Activated T-helper 1 cell treated with anti-CD3 and anti-CD28 coated beads, Interleukin-12 subunit alpha, Interleukin-12 subunit beta, Interleukin-2, Interleukin-4 antibody, amounts not matched to agents 30 ng/mL and 10 ng/mL and 1 ng/mL, durations not matched to agents 14 hours and 24 hours and 36 hours (primary cell): ENCODE measurements at regions of chr16 and their contacts with region 1.

Region 1: DNA sequence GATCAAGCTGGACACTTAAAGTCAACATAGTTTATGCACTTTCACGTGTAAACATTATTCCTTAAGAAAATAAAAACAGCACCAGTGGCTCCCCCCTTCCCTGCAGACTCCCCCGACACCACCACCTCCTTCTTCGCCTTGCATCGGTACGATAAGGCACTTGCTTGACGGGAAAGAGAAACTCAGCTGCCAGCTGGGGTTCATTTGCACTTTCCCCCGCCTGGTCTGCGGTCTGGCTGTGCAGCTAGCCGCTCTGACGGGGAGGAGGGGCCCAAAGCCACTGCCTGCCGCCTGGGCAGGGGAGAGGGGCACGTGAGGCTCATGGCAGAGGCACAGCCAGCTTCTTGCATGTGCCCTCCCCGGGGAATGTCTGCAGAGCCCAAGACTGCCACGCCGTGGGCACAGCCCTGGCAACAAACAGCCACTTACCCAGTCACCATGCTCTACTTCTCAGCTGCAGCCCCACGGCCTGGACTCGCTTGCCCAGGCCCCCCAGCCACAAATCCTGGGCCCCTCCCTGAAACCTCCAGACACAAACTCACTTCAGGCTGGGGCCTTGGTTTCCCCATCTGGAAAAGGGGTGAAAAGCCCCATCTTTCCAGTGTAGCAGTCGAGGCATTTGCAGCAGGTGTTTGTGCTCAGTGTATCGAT is 16.5 kb upstream of the PRM1 start:
- DNase-seq: peak; percentile 70
- H3K4me3 Mint-ChIP-seq: peak overlapping the region; percentile 42
- H3K27ac Mint-ChIP-seq: no peak overlapping the region
- H3K4me1 Mint-ChIP-seq: peaks cover 34% of the 10 kb centered on the region
- H3K27me3 Mint-ChIP-seq: peaks cover 28% of the 10 kb centered on the region

Region 2: DNA sequence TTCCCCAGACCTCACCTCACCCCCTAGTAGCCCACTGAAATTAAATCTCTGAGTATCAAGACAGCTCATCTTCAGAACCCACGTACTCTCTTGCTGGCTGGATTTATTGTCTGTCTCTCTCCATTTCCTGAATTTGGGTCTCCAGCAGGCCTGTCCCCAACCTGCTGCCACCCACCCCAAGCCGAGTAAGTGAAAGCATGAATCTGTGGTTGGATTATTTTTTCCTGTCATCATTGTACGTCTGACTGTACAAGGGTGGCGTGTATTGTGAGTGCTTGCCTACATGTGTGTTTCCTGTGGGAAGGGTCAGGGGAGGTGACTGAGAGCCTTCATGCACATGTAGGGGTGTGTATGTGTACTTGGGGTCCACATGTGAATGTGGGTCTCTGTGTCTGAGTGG is 33.9 kb before region 1 on chr16:
- intact Hi-C with region 1: loop called (anchors 5 kb)
- DNase-seq: peak; percentile 41
- H3K4me3 Mint-ChIP-seq: no peak overlapping the region
- H3K27ac Mint-ChIP-seq: peak overlapping the region; percentile 82
- H3K4me1 Mint-ChIP-seq: peaks cover 41% of the 10 kb centered on the region
- H3K27me3 Mint-ChIP-seq: peaks cover 12% of the 10 kb centered on the region

Region 3: GRCh38 chr16:11319529-11320146 is 22.0 kb after region 1 on chr16:
- intact Hi-C with region 1: no loop called
- DNase-seq: no peak
- H3K4me3 Mint-ChIP-seq: no peak overlapping the region
- H3K27ac Mint-ChIP-seq: no peak overlapping the region
- H3K4me1 Mint-ChIP-seq: peaks cover 19% of the 10 kb centered on the region
- H3K27me3 Mint-ChIP-seq: no peaks in the 10 kb centered on the region

Region 4: GRCh38 chr16:11560701-11561449 is 263.3 kb after region 1 on chr16:
- intact Hi-C with region 1: no loop called
- DNase-seq: peak; percentile 66
- H3K4me3 Mint-ChIP-seq: peak overlapping the region; percentile 81
- H3K27ac Mint-ChIP-seq: peak overlapping the region; percentile 95
- H3K4me1 Mint-ChIP-seq: peaks cover 79% of the 10 kb centered on the region
- H3K27me3 Mint-ChIP-seq: no peaks in the 10 kb centered on the region